ENCODE measurements at regions of chr19 and their contacts with region 1.

Region 1: DNA sequence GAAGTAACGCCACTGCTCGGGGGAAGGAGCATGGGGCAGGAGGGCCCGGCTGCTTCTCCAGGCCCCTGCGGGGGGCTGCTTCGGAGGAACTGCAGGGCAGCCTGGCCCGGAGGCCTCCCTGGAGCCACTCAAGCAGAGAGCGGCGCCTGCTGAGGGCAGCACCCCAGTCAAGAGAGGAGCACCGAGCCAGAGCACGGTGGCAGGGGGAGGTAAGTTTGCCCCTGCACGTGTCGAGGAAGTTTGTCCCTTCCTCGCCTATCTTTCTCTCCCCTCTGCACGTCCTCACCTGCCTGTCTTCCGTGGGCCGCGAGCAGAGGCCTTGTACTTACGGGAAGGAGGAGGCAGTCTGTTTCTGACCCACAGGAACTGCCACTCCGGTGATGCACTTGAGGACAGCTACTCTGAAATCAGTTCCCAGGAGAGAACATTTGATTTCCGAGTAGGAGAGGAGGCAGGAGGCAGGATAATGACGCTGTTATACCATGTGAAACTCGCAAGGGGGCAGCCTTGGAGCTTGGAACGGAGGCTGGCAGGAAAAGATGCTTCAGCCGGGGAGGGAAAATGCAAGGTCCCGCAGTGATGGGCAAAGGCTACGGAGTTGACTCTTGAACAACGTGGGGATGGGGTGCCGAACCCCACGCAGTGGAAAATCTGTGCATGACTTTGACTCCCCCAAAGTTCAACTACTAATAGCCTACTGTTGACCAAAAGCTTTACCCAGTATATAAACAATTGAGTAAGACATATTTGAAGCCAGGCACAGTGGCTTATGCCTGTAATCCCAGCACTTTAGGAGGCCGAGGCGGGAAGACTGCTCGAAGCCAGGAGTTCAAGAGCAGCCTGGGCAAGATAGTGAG is 5.0 kb downstream of the FFAR1 start:
- DNase-seq: peak; percentile 69 to 80 (median 76)
- H3K4me3 ChIP-seq: no peak overlapping the region
- H3K4me3 Mint-ChIP-seq: no peak overlapping the region
- H3K27ac ChIP-seq: no peak overlapping the region
- H3K27ac Mint-ChIP-seq: peak overlapping the region in 5 of 7 donors; percentile 25 to 73 (median 49)
- H3K4me1 ChIP-seq: peaks cover 27 to 32% of the 10 kb centered on the region in 2 donors
- H3K4me1 Mint-ChIP-seq: peaks cover 29% of the 10 kb centered on the region
- H3K27me3 ChIP-seq: no peaks in the 10 kb centered on the region
- H3K27me3 Mint-ChIP-seq: peaks cover 1 to 4% (median 2%) of the 10 kb centered on the region in 3 donors
- CTCF ChIP-seq: peak; percentile 87

Region 2: DNA sequence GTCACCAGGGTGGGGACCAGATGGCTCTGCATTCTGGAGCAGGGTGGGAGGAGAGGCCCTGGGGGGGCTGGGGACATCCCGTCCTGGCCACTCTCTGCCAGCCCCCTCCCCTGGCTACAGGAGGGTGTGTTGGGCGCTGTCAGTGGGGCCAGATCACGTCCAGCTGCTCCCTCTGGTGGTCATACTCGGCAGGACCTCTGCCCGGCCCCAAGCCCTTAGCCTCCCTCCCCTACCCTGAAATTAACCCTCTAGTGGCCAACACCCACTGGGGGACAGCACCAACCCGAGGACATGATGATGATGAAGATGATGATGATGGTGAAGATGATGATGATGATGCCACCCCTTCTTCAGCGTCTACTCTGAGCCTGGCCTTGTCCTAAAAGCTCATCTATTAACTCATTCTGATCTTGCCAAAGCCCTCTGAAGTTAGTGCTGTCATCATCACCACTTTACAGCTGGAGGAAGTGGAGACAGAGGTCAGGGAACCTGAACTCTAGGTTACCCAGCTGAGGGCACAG is 217.2 kb before region 1 on chr19:
- intact Hi-C with region 1: no loop called
- DNase-seq: peak; percentile 62 to 72 (median 66)
- H3K4me3 ChIP-seq: no peak overlapping the region
- H3K4me3 Mint-ChIP-seq: no peak overlapping the region
- H3K27ac ChIP-seq: no peak overlapping the region
- H3K27ac Mint-ChIP-seq: no peak overlapping the region
- H3K4me1 ChIP-seq: peaks cover 26% of the 10 kb centered on the region in 2 donors
- H3K4me1 Mint-ChIP-seq: peaks cover 25% of the 10 kb centered on the region
- H3K27me3 ChIP-seq: no peaks in the 10 kb centered on the region
- H3K27me3 Mint-ChIP-seq: peaks cover 1 to 9% (median 2%) of the 10 kb centered on the region in 3 donors
- CTCF ChIP-seq: peak; percentile 94

Region 3: DNA sequence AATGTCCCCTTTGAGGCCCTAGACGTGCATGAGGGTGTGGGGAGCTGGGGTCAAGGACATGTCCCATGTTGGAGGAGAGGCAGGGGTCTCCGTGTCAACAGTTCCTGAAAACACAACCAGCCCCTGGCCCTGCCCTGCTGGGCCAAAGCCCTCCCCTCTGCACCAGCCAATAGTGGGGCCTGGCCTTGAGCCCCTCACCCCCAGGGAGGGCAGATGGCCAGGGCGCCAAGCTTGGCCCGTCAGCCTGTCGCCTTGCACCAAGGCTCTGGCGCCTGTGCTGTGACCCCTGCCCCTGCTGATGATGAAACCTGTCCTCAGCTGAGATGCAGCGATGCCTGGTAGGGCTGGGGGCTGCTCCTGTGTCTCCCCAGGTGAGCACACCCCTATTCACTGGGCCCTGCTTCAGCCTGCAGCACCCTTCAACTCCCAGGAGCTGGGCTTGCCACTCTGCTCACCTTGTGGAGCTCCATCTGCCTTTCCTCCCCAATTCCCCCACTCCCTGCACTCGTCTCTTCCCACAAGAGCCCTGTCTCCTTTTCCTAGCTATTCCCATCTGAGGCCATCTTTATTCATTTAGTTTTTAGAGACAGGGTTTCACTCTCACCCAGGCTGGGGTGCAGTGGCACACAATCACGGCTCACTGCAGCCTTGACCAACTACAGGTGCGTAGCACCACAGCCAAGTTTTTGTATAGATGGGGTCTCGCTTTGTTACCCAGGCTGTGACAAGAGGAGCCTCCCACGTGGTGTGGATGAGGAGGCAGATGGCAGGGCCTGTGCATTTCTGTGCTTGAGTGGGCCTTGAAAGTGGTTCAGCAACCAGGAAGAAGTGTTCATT is 72.5 kb before region 1 on chr19:
- intact Hi-C with region 1: no loop called
- DNase-seq: no peak
- H3K4me3 ChIP-seq: no peak overlapping the region
- H3K4me3 Mint-ChIP-seq: no peak overlapping the region
- H3K27ac ChIP-seq: no peak overlapping the region
- H3K27ac Mint-ChIP-seq: peak overlapping the region in 3 of 7 donors; percentile 2 to 61 (median 32)
- H3K4me1 ChIP-seq: peaks cover 31 to 42% of the 10 kb centered on the region in 2 donors
- H3K4me1 Mint-ChIP-seq: peaks cover 42% of the 10 kb centered on the region
- H3K27me3 ChIP-seq: no peaks in the 10 kb centered on the region
- H3K27me3 Mint-ChIP-seq: peaks cover 13 to 16% (median 14%) of the 10 kb centered on the region in 3 donors
- CTCF ChIP-seq: no peak

Region 4: DNA sequence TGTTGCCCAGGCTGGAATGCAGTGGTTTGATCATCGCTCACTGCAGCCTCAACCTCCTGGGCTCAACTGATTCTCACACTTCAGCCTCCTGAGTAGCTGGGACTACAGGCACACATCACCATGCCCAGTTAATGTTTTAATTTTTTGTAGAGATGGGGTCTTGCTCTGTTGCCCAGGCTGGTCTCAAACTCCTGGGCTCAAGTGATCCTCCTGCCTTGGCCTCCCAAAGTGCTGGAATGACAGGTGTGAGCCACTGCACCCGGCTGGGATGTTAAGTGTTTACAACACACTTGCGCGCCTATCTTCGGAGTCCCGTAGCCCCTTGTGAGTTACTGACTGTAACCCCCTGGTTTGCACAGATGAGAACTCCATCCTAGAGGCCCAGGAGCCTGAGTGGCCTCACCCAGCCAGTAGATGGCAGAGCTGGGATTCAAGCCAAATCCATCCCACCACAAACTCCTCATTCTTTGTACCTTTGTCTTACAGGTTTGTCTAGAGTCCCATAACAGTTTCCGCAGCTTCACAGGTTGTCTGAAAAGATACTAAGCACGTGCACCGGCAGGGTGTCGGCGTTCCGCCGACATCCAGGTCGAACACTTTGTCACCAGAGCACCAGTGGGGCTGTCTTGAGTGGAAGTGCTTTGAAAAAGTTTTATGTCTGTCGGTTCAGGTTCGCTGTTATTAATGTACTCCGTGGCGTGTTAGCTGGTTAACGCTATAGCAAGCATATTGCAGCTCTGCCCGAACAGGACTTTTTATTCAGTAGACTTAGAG is 46.0 kb before region 1 on chr19:
- intact Hi-C with region 1: loop called in 1 of 2 experiments (anchors 10 kb)
- DNase-seq: no peak
- H3K4me3 ChIP-seq: no peak overlapping the region
- H3K4me3 Mint-ChIP-seq: peak overlapping the region in 1 of 2 donors; percentile 26
- H3K27ac ChIP-seq: peak overlapping the region in 1 of 2 donors; percentile 48
- H3K27ac Mint-ChIP-seq: peak overlapping the region in 6 of 7 donors; percentile 73 to 88 (median 79)
- H3K4me1 ChIP-seq: peaks cover 18 to 21% of the 10 kb centered on the region in 2 donors
- H3K4me1 Mint-ChIP-seq: peaks cover 33% of the 10 kb centered on the region
- H3K27me3 ChIP-seq: no peaks in the 10 kb centered on the region
- H3K27me3 Mint-ChIP-seq: peaks cover 1 to 4% (median 3%) of the 10 kb centered on the region in 3 donors
- CTCF ChIP-seq: peak; percentile 41

Region 5: DNA sequence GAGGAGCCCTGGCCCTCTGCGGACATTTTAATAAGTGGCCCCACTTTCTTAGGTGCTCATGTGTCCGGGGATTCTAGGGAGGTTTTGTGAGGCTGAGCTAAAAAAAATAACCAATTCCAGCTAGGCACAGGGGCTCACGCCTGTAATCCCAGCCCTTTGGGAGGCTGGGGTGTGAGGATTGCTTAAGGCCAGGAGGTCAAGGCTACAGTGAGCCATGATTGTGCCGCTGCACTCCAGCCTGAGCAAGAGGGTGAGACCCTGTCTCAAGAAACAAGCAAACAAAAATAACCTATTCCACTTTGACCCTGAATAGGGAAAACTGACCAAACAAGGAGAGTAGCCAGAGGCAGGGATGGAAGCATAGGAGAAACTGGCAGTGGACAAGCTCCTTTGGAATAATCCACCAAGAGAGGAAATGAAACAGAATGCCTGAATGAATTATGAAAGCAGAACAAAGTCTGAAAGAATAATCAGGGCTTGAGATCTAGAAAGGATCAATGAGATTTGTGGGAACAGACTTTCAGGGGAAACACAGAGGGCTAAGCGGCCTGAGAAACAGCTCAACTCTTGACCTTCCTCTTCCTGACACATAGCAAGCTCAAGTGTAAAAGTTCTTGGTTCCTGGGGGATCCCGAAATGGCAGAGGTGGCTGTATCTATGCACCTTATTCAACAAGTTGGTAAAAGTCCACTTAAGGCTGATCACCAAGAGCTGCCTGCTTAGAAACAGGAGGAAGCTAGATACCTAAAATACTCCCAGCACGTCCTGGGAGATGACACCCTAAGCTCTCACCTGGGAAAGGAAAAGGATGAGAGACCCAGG is 65.2 kb after region 1 on chr19:
- intact Hi-C with region 1: loop called in 1 of 2 experiments (anchors 5 kb)
- DNase-seq: peak in 2 of 3 donors; percentile 14 to 74
- H3K4me3 ChIP-seq: no peak overlapping the region
- H3K4me3 Mint-ChIP-seq: peak overlapping the region in 1 of 2 donors; percentile 46
- H3K27ac ChIP-seq: no peak overlapping the region
- H3K27ac Mint-ChIP-seq: peak overlapping the region in 3 of 7 donors; percentile 35 to 68 (median 64)
- H3K4me1 ChIP-seq: peaks cover 13 to 21% of the 10 kb centered on the region in 2 donors
- H3K4me1 Mint-ChIP-seq: peaks cover 27% of the 10 kb centered on the region
- H3K27me3 ChIP-seq: peaks cover 0 to 13% of the 10 kb centered on the region in 2 donors
- H3K27me3 Mint-ChIP-seq: peaks cover 22 to 38% (median 28%) of the 10 kb centered on the region in 3 donors
- CTCF ChIP-seq: no peak

Region 6: GRCh38 chr19:35468637-35469036 is 116.0 kb after region 1 on chr19:
- intact Hi-C with region 1: loop called (anchors 2 kb)
- DNase-seq: peak; percentile 67 to 84 (median 72)
- H3K4me3 ChIP-seq: no peak overlapping the region
- H3K4me3 Mint-ChIP-seq: no peak overlapping the region
- H3K27ac ChIP-seq: no peak overlapping the region
- H3K27ac Mint-ChIP-seq: peak overlapping the region in 3 of 7 donors; percentile 19 to 41 (median 36)
- H3K4me1 ChIP-seq: peaks cover 5 to 11% of the 10 kb centered on the region in 2 donors
- H3K4me1 Mint-ChIP-seq: peaks cover 18% of the 10 kb centered on the region
- H3K27me3 ChIP-seq: no peaks in the 10 kb centered on the region
- H3K27me3 Mint-ChIP-seq: peaks cover 0 to 4% (median 0%) of the 10 kb centered on the region in 3 donors
- CTCF ChIP-seq: peak; percentile 85

Region 7: GRCh38 chr19:35495107-35496064 is 142.7 kb after region 1 on chr19:
- intact Hi-C with region 1: loop called (anchors 1 to 10 kb)
- DNase-seq: peak; percentile 60 to 76 (median 68)
- H3K4me3 ChIP-seq: no peak overlapping the region
- H3K4me3 Mint-ChIP-seq: peak overlapping the region in 1 of 2 donors; percentile 40
- H3K27ac ChIP-seq: no peak overlapping the region
- H3K27ac Mint-ChIP-seq: peak overlapping the region in 2 of 7 donors; percentile 51 to 62
- H3K4me1 ChIP-seq: peaks cover 0 to 5% of the 10 kb centered on the region in 2 donors
- H3K4me1 Mint-ChIP-seq: peaks cover 7% of the 10 kb centered on the region
- H3K27me3 ChIP-seq: no peaks in the 10 kb centered on the region
- H3K27me3 Mint-ChIP-seq: peaks cover 11 to 19% (median 16%) of the 10 kb centered on the region in 3 donors
- CTCF ChIP-seq: peak; percentile 99

Measured in CD14-positive monocyte (primary cell).